ENCODE measurements at regions of chr6 and their contacts with region 1.

Region 1: GRCh38 chr6:79241228-79241627 is 6.7 kb upstream of the HMGN3 start:
- DNase-seq: no peak
- ATAC-seq: no peak
- H3K4me3 ChIP-seq: no peak overlapping the region
- H3K4me3 Mint-ChIP-seq: no peak overlapping the region
- H3K27ac ChIP-seq: no peak overlapping the region
- H3K27ac Mint-ChIP-seq: no peak overlapping the region
- H3K4me1 ChIP-seq: no peaks in the 10 kb centered on the region
- H3K4me1 Mint-ChIP-seq: no peaks in the 10 kb centered on the region
- H3K27me3 ChIP-seq: no peaks in the 10 kb centered on the region
- H3K27me3 Mint-ChIP-seq: peaks cover 0 to 2% of the 10 kb centered on the region in 2 donors

Region 2: DNA sequence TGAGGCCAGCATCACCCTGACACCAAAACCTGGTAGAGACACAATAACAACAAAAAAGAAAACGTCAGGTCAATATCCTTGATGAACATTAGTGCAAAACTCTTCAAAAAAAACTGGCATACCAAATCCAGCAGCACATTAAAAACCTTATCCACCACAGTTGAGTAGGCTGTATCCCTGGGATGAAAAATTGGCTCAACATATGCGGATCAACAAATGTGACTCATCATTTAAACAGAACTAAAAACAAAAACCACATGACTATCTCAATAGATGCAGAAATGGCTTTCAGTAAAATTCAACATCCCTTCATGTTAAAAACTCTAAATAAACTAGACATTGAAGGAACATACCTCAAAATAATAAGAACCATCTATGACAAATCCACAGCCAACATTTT is 103.6 kb before region 1 on chr6:
- CTCF ChIA-PET with region 1: no interaction called
- POLR2A ChIA-PET with region 1: no interaction called
- DNase-seq: no peak
- ATAC-seq: no peak
- H3K4me3 ChIP-seq: no peak overlapping the region
- H3K4me3 Mint-ChIP-seq: no peak overlapping the region
- H3K27ac ChIP-seq: no peak overlapping the region
- H3K27ac Mint-ChIP-seq: no peak overlapping the region
- H3K4me1 ChIP-seq: no peaks in the 10 kb centered on the region
- H3K4me1 Mint-ChIP-seq: no peaks in the 10 kb centered on the region
- H3K27me3 ChIP-seq: peaks cover 0 to 10% of the 10 kb centered on the region in 2 experiments
- H3K27me3 Mint-ChIP-seq: peaks cover 17 to 33% of the 10 kb centered on the region in 2 donors

Region 3: DNA sequence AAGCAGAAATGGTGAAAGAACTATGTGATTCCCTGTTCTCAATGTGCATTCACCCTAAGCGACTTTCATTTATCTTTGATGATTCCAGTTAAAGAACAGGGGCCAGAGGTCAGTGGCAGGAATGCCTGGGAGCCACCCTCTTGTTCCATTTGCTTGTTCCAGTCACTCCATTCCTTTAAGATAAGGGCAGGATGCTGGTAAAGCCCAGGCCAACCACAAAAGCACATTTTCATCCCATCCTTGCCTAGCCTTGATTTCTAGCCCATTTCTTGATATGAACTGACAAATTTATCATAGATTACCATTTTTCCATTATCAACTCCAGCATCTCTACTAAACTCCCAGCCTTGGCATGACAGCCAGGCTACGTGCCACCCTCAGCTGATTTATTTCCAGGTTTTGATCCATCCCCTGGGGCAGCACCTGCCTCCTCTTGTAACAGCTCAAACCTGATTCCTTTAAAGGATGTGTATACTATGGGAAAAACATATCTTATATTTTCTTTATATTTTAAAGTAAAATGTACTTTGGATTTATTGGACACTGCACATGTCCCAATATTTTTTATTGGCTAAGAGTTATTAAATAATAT is 25.9 kb before region 1 on chr6:
- CTCF ChIA-PET with region 1: no interaction called
- POLR2A ChIA-PET with region 1: interaction called in 1 of 2 experiments, 10 read pairs
- DNase-seq: no peak
- ATAC-seq: no peak
- H3K4me3 ChIP-seq: no peak overlapping the region
- H3K4me3 Mint-ChIP-seq: no peak overlapping the region
- H3K27ac ChIP-seq: no peak overlapping the region
- H3K27ac Mint-ChIP-seq: no peak overlapping the region
- H3K4me1 ChIP-seq: no peaks in the 10 kb centered on the region
- H3K4me1 Mint-ChIP-seq: peaks cover 0 to 6% (median 4%) of the 10 kb centered on the region in 3 donors
- H3K27me3 ChIP-seq: no peaks in the 10 kb centered on the region
- H3K27me3 Mint-ChIP-seq: no peaks in the 10 kb centered on the region